ENCODE measurements at regions of chr5 and their contacts with region 1.

Region 1: DNA sequence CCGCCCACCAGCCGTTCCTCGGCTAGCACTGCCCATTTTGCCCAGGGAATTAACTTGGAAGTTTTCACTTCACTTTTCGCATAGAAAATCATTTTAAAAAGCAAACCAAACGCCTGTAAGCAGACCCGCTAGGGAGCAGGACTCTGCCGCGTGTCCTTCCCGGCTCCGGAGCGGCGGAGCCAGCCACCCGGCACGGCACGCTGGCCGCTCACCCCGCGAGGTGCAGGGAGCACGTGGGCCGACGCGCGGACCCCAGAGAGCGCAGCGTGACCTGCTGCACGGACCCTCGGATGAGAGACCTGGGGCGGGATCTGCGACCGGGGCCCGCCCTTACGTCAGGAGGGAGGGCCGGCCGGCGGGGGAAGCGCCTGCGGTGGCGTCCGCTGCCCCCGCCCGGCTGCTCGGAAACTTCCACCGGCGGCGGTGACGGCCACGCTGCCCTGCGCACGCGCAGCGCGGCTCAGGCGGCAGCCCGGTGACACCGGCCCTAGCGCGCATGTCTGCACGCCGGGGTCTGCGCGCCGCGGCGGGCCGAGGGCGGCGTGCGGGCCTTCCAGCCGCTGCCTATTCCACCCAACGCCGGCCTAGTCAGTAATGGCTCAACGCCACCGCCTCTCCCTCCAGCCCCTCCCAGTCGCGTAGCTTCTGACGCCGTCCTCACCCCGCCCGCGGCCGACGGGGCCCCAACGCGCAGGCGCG is 506 bp upstream of the TENT4A start:
- DNase-seq: peak; percentile 98
- H3K4me3 ChIP-seq: peak overlapping the region; percentile 44 to 74 (median 65)
- H3K27ac ChIP-seq: peak overlapping the region; percentile 65
- H3K4me1 ChIP-seq: peaks cover 25% of the 10 kb centered on the region
- H3K27me3 ChIP-seq: no peaks in the 10 kb centered on the region
- CTCF ChIP-seq: no peak
- POLR2A ChIP-seq: peak; percentile 83

Region 2: GRCh38 chr5:6686915-6687409 is 25.8 kb before region 1 on chr5:
- CTCF ChIA-PET with region 1: no interaction called
- POLR2A ChIA-PET with region 1: no interaction called
- dilution Hi-C with region 1: no loop called
- intact Hi-C with region 1: loop called (anchors 2 kb)
- DNase-seq: peak; percentile 67
- H3K4me3 ChIP-seq: peak overlapping the region; percentile 23 to 76 (median 43)
- H3K27ac ChIP-seq: no peak overlapping the region
- H3K4me1 ChIP-seq: no peaks in the 10 kb centered on the region
- H3K27me3 ChIP-seq: peaks cover 0 to 1% of the 10 kb centered on the region in 2 experiments
- CTCF ChIP-seq: no peak
- POLR2A ChIP-seq: no peak

Region 3: DNA sequence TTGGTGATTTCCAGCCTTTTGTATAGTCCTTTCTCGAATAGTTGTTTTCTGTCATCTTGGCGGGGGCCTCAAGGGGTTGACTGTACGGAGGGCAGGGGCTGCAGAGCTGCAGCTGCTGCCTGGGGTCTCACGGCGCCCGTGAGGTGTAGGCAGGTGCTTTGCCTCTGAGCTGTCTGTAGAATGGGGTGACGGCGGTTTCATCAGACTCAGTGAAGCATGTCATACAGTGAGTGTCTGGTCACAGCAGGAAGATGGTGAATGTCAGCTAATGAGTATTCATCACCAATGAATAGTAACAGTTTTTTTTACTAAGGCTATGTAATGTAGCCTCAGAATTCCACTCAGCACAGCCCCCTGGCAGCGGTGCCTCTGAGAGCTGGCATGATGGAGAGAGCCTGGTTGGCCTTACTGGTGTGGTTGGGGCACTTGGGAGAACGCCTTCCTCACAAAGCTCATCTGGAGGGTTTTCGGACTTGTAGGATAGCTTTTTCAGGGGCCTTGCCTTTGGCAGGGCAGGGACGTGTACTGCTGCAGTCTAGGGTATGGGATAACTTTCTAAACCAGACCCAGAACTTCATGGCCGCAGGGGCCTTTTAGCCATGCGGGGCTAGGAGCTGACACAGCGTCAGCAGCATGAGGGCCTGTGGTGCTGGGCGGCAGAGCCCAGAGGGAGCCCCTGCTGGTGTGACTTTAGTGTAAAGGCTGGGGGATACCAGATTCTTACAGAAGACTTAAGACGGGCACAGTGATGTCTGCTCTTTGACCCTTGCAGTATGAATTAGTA is 15.5 kb after region 1 on chr5:
- CTCF ChIA-PET with region 1: interaction called, 7 read pairs
- POLR2A ChIA-PET with region 1: interaction called, 7 read pairs
- dilution Hi-C with region 1: no loop called
- intact Hi-C with region 1: loop called (anchors 1 kb)
- DNase-seq: no peak
- H3K4me3 ChIP-seq: no peak overlapping the region
- H3K27ac ChIP-seq: no peak overlapping the region
- H3K4me1 ChIP-seq: peaks cover 28% of the 10 kb centered on the region
- H3K27me3 ChIP-seq: no peaks in the 10 kb centered on the region
- CTCF ChIP-seq: no peak
- POLR2A ChIP-seq: no peak

Region 4: GRCh38 chr5:6926491-6927038 is 213.8 kb after region 1 on chr5:
- CTCF ChIA-PET with region 1: no interaction called
- POLR2A ChIA-PET with region 1: no interaction called
- dilution Hi-C with region 1: no loop called
- intact Hi-C with region 1: no loop called
- DNase-seq: no peak
- H3K4me3 ChIP-seq: no peak overlapping the region
- H3K27ac ChIP-seq: no peak overlapping the region
- H3K4me1 ChIP-seq: no peaks in the 10 kb centered on the region
- H3K27me3 ChIP-seq: no peaks in the 10 kb centered on the region
- CTCF ChIP-seq: no peak
- POLR2A ChIP-seq: no peak